ENCODE measurements at regions of chr14 and their contacts with region 1.

Region 1: GRCh38 chr14:95523815-95524448 is 7.5 kb upstream of the SYNE3 start:
- DNase-seq: peak; percentile 69
- ATAC-seq: peak; percentile 52
- H3K4me3 Mint-ChIP-seq: peak overlapping the region; percentile 81
- H3K27ac Mint-ChIP-seq: peak overlapping the region; percentile 95
- H3K4me1 Mint-ChIP-seq: peaks cover 71% of the 10 kb centered on the region
- H3K27me3 Mint-ChIP-seq: no peaks in the 10 kb centered on the region

Region 2: DNA sequence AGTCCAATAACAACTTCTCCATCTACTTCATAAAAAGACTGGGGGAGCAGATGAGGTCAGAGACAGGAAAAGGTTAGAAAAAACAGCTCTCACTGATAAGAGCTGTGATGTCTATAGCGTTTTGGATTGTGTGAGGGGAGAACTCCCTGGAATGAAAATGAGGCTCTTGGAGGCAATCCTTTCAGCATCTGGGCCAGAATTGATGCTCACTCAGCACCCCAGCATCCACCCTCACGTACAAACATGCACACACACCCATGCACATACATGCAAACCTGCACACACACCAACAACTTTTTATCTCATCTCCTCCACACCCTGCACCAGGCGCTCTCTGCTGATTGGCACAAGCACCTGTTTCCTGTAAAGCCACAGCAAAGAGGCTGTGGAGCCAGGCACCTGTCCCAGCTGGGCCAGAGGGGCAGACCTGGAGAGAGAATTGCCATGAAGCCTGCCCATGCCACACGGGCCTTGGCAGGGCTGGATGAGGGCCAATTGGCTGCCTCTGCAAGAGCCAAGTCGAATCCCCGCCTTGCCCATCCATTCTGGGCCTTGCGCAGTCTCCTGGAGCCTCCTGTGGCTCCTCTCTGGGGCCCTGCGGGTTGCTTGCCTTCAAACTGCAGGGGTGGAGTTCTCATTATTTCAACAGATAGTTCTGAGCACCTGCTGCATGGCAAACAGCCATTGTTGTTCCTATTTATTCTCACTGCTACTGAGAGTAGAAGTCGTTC is 60.6 kb before region 1 on chr14:
- POLR2A ChIA-PET with region 1: interaction called, 27 read pairs
- DNase-seq: peak; percentile 44
- ATAC-seq: peak; percentile 84
- H3K4me3 Mint-ChIP-seq: peak overlapping the region; percentile 52
- H3K27ac Mint-ChIP-seq: peak overlapping the region; percentile 87
- H3K4me1 Mint-ChIP-seq: peaks cover 33% of the 10 kb centered on the region
- H3K27me3 Mint-ChIP-seq: no peaks in the 10 kb centered on the region

Region 3: DNA sequence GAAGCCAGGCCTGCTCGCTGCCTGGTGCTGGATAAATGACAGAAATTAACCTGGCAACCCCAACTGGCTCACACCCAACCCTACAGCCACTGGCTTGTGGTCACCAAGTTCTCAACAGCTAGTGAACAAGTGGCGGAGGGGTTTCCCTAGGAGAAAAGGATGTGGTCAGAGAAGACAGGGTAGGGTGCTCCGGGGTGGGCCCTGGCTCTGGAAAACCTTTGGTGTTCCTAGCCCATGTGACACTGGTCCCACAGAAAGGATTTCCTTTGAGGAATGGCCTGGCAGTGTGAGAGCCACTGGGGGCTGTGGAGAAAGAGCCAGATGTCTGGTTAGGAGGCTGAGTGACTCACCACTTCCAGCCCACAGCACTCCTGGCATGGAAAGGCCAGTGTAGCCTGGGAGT is 16.2 kb before region 1 on chr14:
- POLR2A ChIA-PET with region 1: interaction called, 16 read pairs
- DNase-seq: no peak
- ATAC-seq: peak; percentile 59
- H3K4me3 Mint-ChIP-seq: peak overlapping the region; percentile 25
- H3K27ac Mint-ChIP-seq: no peak overlapping the region
- H3K4me1 Mint-ChIP-seq: peaks cover 52% of the 10 kb centered on the region
- H3K27me3 Mint-ChIP-seq: no peaks in the 10 kb centered on the region

Region 4: GRCh38 chr14:95534299-95535225 is 10.6 kb after region 1 on chr14 and contains the start of gene GLRX5:
- POLR2A ChIA-PET with region 1: interaction called, 70 read pairs
- DNase-seq: peak; percentile 97
- ATAC-seq: peak; percentile 93
- H3K4me3 Mint-ChIP-seq: peak within 1 kb of the TSS; percentile 96
- H3K27ac Mint-ChIP-seq: peak within 1 kb of the TSS; percentile 93
- H3K4me1 Mint-ChIP-seq: peaks cover 44% of the 10 kb centered on the region
- H3K27me3 Mint-ChIP-seq: no peaks in the 10 kb centered on the region
- total RNA-seq, gene GLRX5: 33.8 to 34.7 TPM